ENCODE measurements at regions of chr3 and their contacts with region 1.

Region 1: DNA sequence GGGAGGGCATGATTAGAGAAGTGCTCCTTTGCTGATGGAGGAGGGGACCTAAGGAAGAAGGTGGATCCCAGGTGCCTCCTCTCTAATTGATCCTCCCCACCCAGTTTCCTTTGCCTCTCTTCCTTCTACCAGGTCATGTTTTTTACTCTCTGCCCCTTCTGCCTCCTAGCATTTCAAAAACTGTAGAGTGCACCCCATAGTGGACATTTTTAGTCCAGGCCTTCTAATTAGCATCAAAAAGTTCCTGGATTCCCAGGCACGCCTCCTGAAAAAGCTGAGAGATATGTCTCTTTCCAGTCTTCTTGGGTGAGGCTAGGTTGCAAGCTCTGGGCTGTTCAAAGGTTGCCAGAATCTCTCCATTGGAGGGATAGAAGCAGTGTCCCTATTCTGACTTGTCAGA is 18.7 kb upstream of the ITGB5 start:
- DNase-seq: no peak
- H3K4me3 ChIP-seq: no peak overlapping the region
- H3K27ac ChIP-seq: no peak overlapping the region
- H3K4me1 ChIP-seq: no peaks in the 10 kb centered on the region
- H3K27me3 ChIP-seq: peaks cover 26 to 27% of the 10 kb centered on the region in 2 experiments
- CTCF ChIP-seq: no peak
- POLR2A ChIP-seq: no peak

Region 2: GRCh38 chr3:124688581-124689454 is 217.0 kb before region 1 on chr3:
- CTCF ChIA-PET with region 1: interaction called, 20 read pairs
- POLR2A ChIA-PET with region 1: no interaction called
- dilution Hi-C with region 1: no loop called
- intact Hi-C with region 1: loop called (anchors 1 kb)
- DNase-seq: peak; percentile 82
- H3K4me3 ChIP-seq: no peak overlapping the region
- H3K27ac ChIP-seq: no peak overlapping the region
- H3K4me1 ChIP-seq: no peaks in the 10 kb centered on the region
- H3K27me3 ChIP-seq: peaks cover 7 to 13% of the 10 kb centered on the region in 2 experiments
- CTCF ChIP-seq: peak; percentile 80 to 81
- POLR2A ChIP-seq: no peak

Region 3: GRCh38 chr3:124768812-124769211 is 137.0 kb before region 1 on chr3:
- CTCF ChIA-PET with region 1: interaction called, 424 read pairs
- POLR2A ChIA-PET with region 1: no interaction called
- dilution Hi-C with region 1: no loop called
- intact Hi-C with region 1: loop called (anchors 2 kb)
- DNase-seq: no peak
- H3K4me3 ChIP-seq: no peak overlapping the region
- H3K27ac ChIP-seq: no peak overlapping the region
- H3K4me1 ChIP-seq: peaks cover 31% of the 10 kb centered on the region
- H3K27me3 ChIP-seq: no peaks in the 10 kb centered on the region
- CTCF ChIP-seq: peak in 1 of 2 donors; percentile 26
- POLR2A ChIP-seq: no peak

Region 4: DNA sequence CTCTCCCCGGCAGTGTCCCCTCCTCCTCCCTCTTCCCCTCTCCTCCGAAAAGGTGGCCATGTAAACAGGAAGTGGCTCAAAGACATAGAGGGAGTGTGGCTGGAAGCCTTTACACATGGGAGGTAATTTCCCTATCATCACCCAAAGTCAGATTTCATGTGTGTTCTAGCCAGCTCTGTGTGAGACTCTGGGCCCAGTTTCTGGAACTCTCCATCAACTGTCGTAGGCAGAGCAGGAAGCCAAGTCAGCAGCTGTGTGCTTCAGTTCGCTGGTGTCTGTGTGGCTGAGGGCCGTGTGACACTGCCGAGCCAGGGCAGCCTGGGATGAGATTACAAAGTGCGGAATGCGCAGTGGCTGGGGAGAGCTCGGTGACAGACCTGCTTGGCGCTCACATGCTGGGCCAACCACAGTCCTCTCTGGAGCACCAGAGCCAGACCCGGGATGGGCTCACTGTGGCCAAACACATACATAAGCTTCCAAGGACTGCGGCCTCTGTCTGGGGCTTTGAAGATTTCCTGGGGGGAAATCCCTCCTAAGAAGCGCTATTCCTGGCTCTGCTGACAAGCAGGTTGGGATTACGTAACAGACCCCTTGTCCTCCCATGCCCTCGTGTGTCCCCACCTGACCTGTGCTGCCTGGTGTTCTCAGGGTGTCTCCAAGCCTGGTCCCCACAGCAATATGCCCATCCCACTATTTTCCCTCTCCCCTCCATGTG is 124.9 kb before region 1 on chr3:
- CTCF ChIA-PET with region 1: interaction called, 289 read pairs
- POLR2A ChIA-PET with region 1: no interaction called
- dilution Hi-C with region 1: no loop called
- intact Hi-C with region 1: loop called (anchors 1 kb)
- DNase-seq: peak; percentile 43
- H3K4me3 ChIP-seq: no peak overlapping the region
- H3K27ac ChIP-seq: no peak overlapping the region
- H3K4me1 ChIP-seq: peaks cover 15% of the 10 kb centered on the region
- H3K27me3 ChIP-seq: no peaks in the 10 kb centered on the region
- CTCF ChIP-seq: no peak
- POLR2A ChIP-seq: no peak

Region 5: GRCh38 chr3:124845406-124845805 is 60.4 kb before region 1 on chr3:
- CTCF ChIA-PET with region 1: interaction called, 21 read pairs
- POLR2A ChIA-PET with region 1: no interaction called
- dilution Hi-C with region 1: no loop called
- intact Hi-C with region 1: no loop called
- DNase-seq: peak; percentile 70
- H3K4me3 ChIP-seq: no peak overlapping the region
- H3K27ac ChIP-seq: peak overlapping the region; percentile 11
- H3K4me1 ChIP-seq: peaks cover 9% of the 10 kb centered on the region
- H3K27me3 ChIP-seq: no peaks in the 10 kb centered on the region
- CTCF ChIP-seq: no peak
- POLR2A ChIP-seq: no peak

Region 6: DNA sequence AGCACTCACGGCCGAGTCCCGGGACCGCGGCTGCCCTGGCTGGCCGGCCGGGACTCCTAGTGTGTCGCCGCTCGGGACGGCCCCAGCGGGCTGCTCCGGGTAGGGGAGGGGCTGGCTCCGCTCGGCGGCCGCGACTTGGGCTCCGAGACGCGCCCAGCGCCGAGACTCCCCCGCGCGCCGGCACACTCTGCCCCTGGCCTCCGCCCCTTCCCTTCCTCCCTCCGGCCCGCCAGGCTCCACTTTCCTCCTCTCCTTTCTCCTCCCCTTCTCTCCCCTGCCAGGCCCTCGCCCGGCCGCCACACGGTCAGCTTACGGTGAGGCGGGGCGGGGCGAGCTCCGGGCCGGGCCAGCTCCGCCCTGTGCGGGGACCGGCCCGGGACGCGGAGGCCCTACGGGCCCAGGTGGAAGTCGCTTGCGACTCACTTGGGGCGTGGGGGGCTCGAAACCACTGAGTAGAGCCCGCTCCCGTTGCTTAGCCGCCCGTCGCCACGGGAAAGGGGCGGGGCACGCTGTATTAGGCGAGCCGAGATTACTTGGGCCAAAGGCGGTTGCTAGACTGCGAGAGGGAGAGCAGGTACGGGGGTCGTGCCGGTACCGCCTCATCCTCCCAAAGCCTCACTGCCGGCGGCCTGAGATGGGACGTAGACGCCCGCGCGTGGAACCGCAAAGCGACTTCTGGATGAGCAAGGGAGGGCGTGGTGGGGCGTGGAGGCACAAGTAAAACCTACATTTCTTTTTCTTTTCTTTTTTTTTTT is 18.5 kb before region 1 on chr3 and contains the start of gene ITGB5:
- CTCF ChIA-PET with region 1: interaction called, 56 read pairs
- POLR2A ChIA-PET with region 1: no interaction called
- dilution Hi-C with region 1: no loop called
- intact Hi-C with region 1: loop called (anchors 2 kb)
- DNase-seq: peak; percentile 72
- H3K4me3 ChIP-seq: peak within 1 kb of the TSS; percentile 36 to 73 (median 47)
- H3K27ac ChIP-seq: peak within 1 kb of the TSS; percentile 57
- H3K4me1 ChIP-seq: peaks cover 23% of the 10 kb centered on the region
- H3K27me3 ChIP-seq: no peaks in the 10 kb centered on the region
- CTCF ChIP-seq: no peak
- POLR2A ChIP-seq: peak; percentile 57
- total RNA-seq, gene ITGB5: 144 TPM in 2 replicates

Region 7: GRCh38 chr3:124978627-124979026 is 72.8 kb after region 1 on chr3:
- CTCF ChIA-PET with region 1: no interaction called
- POLR2A ChIA-PET with region 1: no interaction called
- dilution Hi-C with region 1: no loop called
- intact Hi-C with region 1: no loop called
- DNase-seq: no peak
- H3K4me3 ChIP-seq: no peak overlapping the region
- H3K27ac ChIP-seq: no peak overlapping the region
- H3K4me1 ChIP-seq: peaks cover 11% of the 10 kb centered on the region
- H3K27me3 ChIP-seq: no peaks in the 10 kb centered on the region
- CTCF ChIP-seq: no peak
- POLR2A ChIP-seq: no peak

Region 8: DNA sequence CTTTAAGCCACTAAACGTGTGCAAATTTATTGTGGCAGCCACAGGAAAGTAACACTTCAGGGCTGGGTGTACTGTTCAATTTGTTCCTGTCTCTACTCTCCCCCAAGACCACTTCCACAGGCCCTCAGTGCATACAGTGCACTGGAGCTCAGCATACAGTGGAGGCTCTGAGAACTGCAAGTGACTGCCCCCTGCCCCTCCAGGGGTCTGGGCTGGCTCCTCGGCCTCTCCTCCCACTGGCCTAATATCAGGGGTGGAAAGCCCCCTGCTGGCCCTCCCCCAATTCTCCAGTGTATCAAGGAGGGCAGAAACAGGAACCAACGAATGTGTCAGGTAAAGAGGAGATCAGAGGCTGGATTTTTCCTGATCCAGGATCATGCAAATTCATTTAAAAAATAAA is 169.9 kb after region 1 on chr3:
- CTCF ChIA-PET with region 1: no interaction called
- POLR2A ChIA-PET with region 1: no interaction called
- dilution Hi-C with region 1: no loop called
- intact Hi-C with region 1: no loop called
- DNase-seq: no peak
- H3K4me3 ChIP-seq: no peak overlapping the region
- H3K27ac ChIP-seq: no peak overlapping the region
- H3K4me1 ChIP-seq: peaks cover 6% of the 10 kb centered on the region
- H3K27me3 ChIP-seq: no peaks in the 10 kb centered on the region
- CTCF ChIP-seq: no peak
- POLR2A ChIP-seq: no peak

Measured in endothelial cell of umbilical vein (primary cell).